ENCODE measurements at regions of chr3 and their contacts with region 1.

Region 1: DNA sequence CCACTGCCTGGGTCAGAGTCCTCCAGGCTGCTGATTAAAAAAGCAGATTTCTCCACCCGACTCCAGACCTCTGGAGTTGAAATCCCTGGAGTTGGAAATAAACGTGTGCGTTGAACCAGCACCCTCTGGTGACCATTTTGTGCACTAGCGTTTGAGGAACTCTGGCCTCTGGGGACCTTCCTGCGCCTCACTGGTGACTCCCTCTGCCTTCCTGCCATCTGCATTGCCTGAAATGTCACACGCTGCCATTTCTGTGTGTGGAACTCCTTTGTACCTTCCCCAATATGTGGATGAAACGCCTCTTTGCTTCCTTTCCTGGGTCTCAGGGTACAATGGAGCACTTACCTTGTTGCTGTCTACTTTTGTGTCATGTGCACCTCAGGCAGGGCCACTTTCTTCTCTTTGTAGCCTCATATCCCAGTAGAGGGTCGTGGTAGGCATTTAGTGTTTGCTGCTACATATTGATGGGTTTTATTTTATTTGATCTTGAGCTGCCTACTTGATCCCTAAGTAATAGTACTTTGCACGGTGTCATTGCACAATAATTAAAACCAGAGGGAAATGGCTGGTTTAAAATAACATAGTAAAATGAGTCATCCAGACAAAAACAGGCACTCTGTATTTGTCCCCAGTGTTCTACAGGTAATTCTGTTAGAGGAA is 56.8 kb downstream of the GPR171 start:
- DNase-seq: peak; percentile 68 to 73 (median 70)
- ATAC-seq: peak; percentile 93 to 98 (median 94)
- H3K4me3 ChIP-seq: peak overlapping the region in 2 of 12 donors; percentile 8 to 17
- H3K27ac ChIP-seq: no peak overlapping the region
- H3K4me1 ChIP-seq: peaks cover 0 to 12% (median 6%) of the 10 kb centered on the region in 12 donors
- H3K27me3 ChIP-seq: peaks cover 0 to 7% (median 0%) of the 10 kb centered on the region in 9 donors
- CTCF ChIP-seq: peak; percentile 80 to 94 (median 88)
- POLR2A ChIP-seq: no peak

Region 2: GRCh38 chr3:150721285-150722130 is 424.7 kb before region 1 on chr3:
- intact Hi-C with region 1: loop called (anchors 1 to 5 kb)
- DNase-seq: no peak
- ATAC-seq: peak; percentile 37 to 81 (median 77)
- H3K4me3 ChIP-seq: peak overlapping the region in 1 of 12 donors; percentile 11
- H3K27ac ChIP-seq: no peak overlapping the region
- H3K4me1 ChIP-seq: peaks cover 0 to 7% (median 4%) of the 10 kb centered on the region in 12 donors
- H3K27me3 ChIP-seq: no peaks in the 10 kb centered on the region
- CTCF ChIP-seq: peak; percentile 78 to 92 (median 84)
- POLR2A ChIP-seq: no peak

Region 3: DNA sequence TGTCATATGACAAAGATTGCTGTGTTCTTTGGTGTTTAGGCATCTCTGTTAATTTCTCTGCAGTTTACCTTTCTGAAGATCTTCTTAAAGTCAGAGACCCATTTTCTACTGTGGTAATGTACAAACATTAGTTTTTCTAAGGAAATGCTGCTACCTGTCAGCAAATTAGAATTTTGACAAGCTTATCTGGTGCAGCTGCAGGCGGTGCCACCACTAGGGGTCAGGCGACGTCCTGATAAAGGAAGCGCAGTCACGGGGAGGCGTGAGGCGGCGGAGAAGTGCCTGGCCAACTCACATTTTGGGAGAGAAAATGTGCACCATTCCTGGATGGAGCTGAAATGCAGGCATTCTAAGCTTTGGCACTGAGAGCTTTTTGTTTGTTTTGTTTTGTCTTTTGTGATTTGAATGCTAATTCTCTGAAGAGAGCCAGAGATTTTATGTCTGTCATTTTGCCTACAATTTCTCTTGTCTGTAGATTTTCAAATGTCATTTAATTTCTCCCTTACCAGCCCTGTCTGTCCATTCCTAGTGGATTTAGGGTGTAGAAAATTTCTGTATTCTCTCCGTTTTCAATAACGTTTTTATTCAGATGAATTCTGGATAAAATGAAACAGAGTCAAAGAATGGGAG is 358.3 kb before region 1 on chr3:
- intact Hi-C with region 1: loop called (anchors 1 to 5 kb)
- DNase-seq: peak; percentile 75 to 91 (median 86)
- ATAC-seq: peak in 3 of 4 donors; percentile 79 to 88 (median 84)
- H3K4me3 ChIP-seq: no peak overlapping the region
- H3K27ac ChIP-seq: no peak overlapping the region
- H3K4me1 ChIP-seq: no peaks in the 10 kb centered on the region
- H3K27me3 ChIP-seq: peaks cover 0 to 11% (median 0%) of the 10 kb centered on the region in 9 donors
- CTCF ChIP-seq: peak; percentile 77 to 95 (median 88)
- POLR2A ChIP-seq: no peak

Region 4: DNA sequence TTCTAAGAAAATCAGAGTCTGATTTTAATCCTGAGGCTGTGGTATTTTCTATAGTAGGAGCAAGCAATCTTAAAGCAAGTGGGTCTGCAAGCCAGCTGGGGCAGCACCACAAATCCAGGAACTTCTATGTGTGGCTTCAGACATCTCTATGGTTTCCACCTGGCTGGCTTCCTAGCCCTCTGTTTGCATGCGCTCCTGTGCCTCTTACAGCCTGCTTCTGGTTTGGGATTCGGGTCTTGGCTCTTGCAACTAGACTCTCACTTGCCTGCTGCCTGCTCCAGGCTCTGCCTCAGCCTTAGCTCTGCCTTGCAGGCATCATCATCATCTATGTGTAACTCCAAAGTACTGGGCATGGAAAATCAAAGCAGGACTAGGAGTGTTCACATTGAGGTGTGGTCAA is 284.4 kb before region 1 on chr3:
- intact Hi-C with region 1: loop called in 4 of 10 experiments (anchors 5 to 10 kb)
- DNase-seq: no peak
- ATAC-seq: no peak
- H3K4me3 ChIP-seq: no peak overlapping the region
- H3K27ac ChIP-seq: no peak overlapping the region
- H3K4me1 ChIP-seq: peaks cover 0 to 2% (median 0%) of the 10 kb centered on the region in 12 donors
- H3K27me3 ChIP-seq: no peaks in the 10 kb centered on the region
- CTCF ChIP-seq: no peak
- POLR2A ChIP-seq: no peak

Region 5: DNA sequence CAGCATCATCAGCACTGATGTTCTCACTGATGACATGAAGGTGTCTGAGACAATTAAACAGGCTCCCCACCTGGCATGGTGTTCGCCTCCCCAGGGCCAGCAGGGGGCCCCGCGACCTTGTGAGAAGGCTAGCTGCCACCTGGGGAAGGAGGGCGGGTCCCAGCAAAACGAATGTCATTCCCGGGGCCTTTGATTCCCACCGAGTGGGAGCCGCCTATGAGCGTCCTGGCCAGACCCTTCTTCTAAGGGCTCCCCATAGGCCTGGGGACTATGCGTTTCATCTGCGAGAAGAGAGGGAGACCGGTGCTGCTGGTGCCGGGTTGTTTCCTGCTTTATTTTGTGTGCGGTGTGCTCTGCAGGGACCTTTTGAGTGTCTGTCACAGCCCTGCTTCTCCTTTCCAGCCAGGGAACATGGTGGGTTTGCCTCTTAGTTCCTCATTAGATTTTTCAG is 220.4 kb before region 1 on chr3:
- intact Hi-C with region 1: loop called in 9 of 10 experiments (anchors 2 to 10 kb)
- DNase-seq: peak; percentile 11 to 68 (median 39)
- ATAC-seq: peak; percentile 20 to 82 (median 78)
- H3K4me3 ChIP-seq: peak overlapping the region in 6 of 12 donors; percentile 2 to 35 (median 19)
- H3K27ac ChIP-seq: no peak overlapping the region
- H3K4me1 ChIP-seq: peaks cover 0 to 7% (median 0%) of the 10 kb centered on the region in 12 donors
- H3K27me3 ChIP-seq: peaks cover 0 to 9% (median 0%) of the 10 kb centered on the region in 9 donors
- CTCF ChIP-seq: peak; percentile 20 to 56 (median 44)
- POLR2A ChIP-seq: no peak

Region 6: DNA sequence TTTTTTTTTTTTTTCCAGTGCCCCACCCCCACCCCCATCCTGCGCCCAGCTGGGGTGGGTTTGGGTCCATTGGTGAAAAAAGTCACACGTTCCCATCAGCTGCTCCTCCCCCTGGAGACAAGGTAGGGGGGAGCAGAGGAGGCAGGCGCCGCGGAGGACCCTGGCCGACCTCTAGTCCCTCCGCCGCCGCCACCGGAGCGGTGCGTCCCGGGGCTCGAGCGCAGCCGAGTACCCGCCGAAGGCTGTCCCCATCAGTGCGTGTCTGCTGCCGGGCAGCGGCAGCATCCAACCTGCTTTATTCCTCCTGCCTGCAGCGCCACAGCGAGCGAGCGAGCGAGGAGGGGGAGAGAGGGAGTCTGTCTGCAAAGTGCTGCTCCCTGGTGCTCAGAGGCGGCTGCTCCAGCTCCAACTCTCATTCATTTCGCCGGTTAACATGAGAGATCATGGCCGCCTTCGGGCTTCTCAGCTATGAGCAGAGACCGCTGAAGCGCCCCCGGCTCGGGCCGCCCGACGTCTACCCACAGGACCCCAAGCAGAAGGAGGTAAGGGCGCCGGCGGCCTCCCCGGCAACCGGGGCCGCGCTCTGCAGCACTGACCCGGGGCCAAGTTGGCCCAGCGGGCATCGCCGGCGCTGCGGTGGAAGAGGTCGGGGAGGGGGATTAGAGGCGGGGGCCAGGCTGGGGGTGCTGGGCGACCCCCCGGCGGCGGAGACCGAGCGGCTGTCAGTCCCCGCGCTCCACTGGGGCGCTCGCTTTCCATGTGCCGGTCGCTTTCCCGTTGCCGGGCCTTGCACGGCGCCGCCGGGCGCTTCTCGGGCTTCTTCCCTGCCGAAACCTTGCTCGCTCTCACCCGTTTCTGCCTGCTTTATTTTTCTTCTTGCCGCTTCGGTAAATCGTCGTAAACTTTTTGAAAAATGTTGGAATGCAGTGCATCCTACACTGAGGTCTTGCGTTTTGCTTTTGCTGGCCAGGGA is 59.4 kb before region 1 on chr3:
- intact Hi-C with region 1: loop called in 1 of 10 experiments (anchors 5 kb)
- DNase-seq: peak; percentile 70 to 79 (median 77)
- ATAC-seq: peak; percentile 82 to 94 (median 92)
- H3K4me3 ChIP-seq: peak overlapping the region; percentile 42 to 82 (median 66)
- H3K27ac ChIP-seq: peak overlapping the region in 4 of 12 donors; percentile 35 to 66 (median 46)
- H3K4me1 ChIP-seq: peaks cover 0 to 27% (median 7%) of the 10 kb centered on the region in 12 donors
- H3K27me3 ChIP-seq: peaks cover 0 to 57% (median 18%) of the 10 kb centered on the region in 9 donors
- CTCF ChIP-seq: peak in 9 of 12 donors; percentile 20 to 69 (median 46)
- POLR2A ChIP-seq: no peak

Region 7: GRCh38 chr3:151290673-151291072 is 144.5 kb after region 1 on chr3:
- intact Hi-C with region 1: no loop called
- DNase-seq: no peak
- ATAC-seq: no peak
- H3K4me3 ChIP-seq: no peak overlapping the region
- H3K27ac ChIP-seq: no peak overlapping the region
- H3K4me1 ChIP-seq: no peaks in the 10 kb centered on the region
- H3K27me3 ChIP-seq: no peaks in the 10 kb centered on the region
- CTCF ChIP-seq: peak in 9 of 12 donors; percentile 23 to 51 (median 36)
- POLR2A ChIP-seq: no peak

Measured in heart left ventricle (tissue), 16 donors.